HepG2 (cell line): ENCODE measurements at regions of chr5 and their contacts with region 1.

Region 1: DNA sequence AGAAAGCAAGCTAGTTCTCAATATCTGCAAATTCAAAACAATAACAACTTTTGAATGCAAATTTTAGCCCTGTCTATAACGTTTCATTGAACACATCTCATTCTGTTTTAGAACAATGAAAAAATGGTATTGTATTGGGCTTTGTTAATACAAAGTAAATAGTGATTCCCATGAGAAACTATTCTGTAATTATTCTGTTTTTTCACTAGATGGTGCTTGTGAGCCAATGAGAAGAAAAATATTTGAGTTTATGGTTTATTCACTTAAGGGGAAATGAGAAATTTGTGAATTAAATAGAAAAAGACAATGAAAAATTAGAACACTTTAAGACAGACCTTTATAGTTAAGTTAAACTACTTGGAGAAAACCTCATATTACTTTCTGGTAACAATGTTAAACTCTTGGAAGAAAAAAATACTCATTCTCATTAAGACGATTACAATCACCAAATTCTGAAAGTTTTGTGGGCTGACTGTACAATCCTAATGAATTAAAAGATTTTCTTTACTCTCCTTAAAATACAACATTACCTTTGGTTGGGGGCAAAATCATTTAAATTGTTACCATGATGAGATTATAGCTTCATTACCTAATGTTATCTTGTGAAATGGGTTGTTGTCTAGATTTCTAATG is 127.0 kb downstream of the NNT start:
- DNase-seq: peak; percentile 15
- ATAC-seq: no peak
- H3K4me3 ChIP-seq: no peak overlapping the region
- H3K27ac ChIP-seq: no peak overlapping the region
- H3K4me1 ChIP-seq: no peaks in the 10 kb centered on the region
- H3K27me3 ChIP-seq: no peaks in the 10 kb centered on the region
- CTCF ChIP-seq: peak; percentile 47
- EP300 ChIP-seq: no peak
- POLR2A ChIP-seq: no peak
- RAD21 ChIP-seq: no peak

Region 2: DNA sequence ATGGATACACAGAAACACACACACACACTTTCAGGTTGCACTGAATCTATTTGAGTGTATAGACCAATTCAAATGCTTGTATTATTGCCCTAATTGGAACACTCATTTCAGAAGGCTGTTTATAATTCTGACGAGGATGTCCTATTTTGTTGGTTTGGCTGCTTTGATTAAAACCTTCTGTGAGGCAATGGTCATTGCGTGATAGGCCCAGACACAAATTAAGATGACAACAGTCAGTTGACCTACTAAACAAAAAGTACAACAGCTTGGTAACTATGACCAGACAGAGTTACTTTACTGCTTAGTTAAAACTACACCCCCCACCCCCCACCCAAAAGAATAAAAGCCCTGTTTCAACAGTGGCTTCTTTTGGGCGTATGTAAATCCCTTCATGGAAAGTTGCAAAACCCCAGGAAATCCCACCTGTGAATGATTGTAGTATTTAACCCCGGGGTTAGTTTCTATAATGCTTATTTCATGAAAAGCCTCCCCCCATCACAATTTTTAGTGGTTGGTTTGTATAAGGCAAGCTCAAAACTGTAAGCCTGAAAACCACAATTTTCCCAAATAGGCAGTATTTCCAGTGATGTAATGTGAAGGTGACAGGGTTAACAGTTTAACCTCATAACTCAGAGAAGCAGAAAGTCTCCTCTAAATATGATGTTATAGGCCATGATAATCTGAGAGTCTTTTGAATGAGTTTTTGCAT is 318.5 kb after region 1 on chr5:
- CTCF ChIA-PET with region 1: no interaction called
- POLR2A ChIA-PET with region 1: no interaction called
- in situ Hi-C with region 1: no loop called
- intact Hi-C with region 1: loop called (anchors 10 kb)
- DNase-seq: no peak
- ATAC-seq: no peak
- H3K4me3 ChIP-seq: no peak overlapping the region
- H3K27ac ChIP-seq: no peak overlapping the region
- H3K4me1 ChIP-seq: no peaks in the 10 kb centered on the region
- H3K27me3 ChIP-seq: no peaks in the 10 kb centered on the region
- CTCF ChIP-seq: no peak
- EP300 ChIP-seq: no peak
- POLR2A ChIP-seq: no peak
- RAD21 ChIP-seq: no peak